ENCODE measurements at regions of chr3 and their contacts with region 1.

Region 1: DNA sequence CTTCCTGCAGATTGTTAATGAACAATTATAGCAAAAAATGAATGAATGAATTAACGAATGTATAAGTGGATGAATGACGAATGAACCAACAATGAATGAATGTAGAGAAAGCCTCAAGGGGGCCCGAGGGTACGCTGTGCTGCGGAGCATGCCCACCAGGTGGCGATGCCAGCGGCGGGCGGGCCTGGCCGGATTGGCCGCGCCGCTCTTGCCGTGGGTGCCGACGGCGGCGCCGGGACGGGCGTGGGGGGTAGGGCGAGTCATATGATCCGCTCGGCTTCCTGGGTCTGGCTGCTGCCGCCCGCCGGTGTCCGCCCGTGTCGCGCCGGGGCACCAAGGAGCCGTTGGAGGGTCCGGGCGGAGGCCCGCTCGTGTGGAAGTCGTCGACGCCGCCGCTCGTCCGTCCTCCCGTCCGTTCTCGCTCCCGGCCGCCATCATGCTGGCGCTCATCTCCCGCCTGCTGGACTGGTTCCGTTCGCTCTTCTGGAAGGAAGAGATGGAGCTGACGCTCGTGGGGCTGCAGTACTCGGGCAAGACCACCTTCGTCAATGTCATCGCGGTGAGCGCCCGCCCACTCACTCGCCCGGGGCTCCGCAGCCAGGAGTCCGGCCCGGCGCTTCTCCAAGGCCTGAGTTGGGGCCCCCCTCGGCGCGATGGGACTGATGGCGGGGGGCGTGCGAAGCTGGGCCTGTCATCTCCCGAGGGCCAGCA is at the start of gene ARL8B:
- DNase-seq: peak; percentile 80 to 90
- H3K4me3 ChIP-seq: peak within 1 kb of the TSS; percentile 77 to 100 (median 100)
- H3K27ac ChIP-seq: peak within 1 kb of the TSS; percentile 95
- H3K4me1 ChIP-seq: peaks cover 0 to 6% of the 10 kb centered on the region in 2 donors
- H3K27me3 ChIP-seq: no peaks in the 10 kb centered on the region
- CTCF ChIP-seq: peak; percentile 92 to 98 (median 93)
- POLR2A ChIP-seq: peak; percentile 53
- total RNA-seq, gene ARL8B: 47.2 to 68.5 (median 52.3) TPM

Region 2: DNA sequence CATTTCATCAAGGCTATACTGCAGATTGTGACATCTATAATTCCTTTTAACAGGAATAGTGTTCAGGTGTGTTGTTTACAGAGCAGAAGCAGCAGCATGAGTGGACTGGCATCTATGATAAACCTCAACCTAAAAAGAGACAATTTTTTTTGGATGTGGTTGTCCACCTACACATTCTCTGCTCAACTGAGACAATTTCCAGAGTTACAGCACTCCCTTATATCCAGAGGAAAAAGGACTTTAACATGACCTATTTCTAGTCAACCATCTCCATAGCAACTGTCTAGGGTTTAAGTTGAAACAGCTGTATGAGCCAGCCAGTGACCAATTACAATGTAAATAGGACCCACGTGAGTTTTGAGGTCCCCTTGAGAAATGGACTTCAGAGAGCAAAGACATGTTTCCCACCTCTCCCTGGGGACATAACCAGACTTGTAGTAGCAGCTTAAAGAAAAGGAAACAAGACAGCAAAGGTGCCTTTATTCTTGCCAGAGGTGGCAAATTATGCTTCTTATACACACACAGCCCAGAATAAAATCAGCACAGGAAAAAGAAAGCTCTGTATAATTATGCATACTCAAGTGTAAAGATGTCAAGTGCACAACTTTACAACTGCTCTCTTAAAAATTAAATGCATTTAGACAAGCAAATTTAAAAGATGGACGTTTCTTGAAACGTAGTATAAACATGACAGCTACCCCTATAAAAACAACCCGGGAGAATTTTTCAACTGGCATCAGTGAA is 695.4 kb before region 1 on chr3:
- intact Hi-C with region 1: no loop called
- DNase-seq: no peak
- H3K4me3 ChIP-seq: no peak overlapping the region
- H3K27ac ChIP-seq: no peak overlapping the region
- H3K4me1 ChIP-seq: no peaks in the 10 kb centered on the region
- H3K27me3 ChIP-seq: no peaks in the 10 kb centered on the region
- CTCF ChIP-seq: no peak
- POLR2A ChIP-seq: no peak

Region 3: DNA sequence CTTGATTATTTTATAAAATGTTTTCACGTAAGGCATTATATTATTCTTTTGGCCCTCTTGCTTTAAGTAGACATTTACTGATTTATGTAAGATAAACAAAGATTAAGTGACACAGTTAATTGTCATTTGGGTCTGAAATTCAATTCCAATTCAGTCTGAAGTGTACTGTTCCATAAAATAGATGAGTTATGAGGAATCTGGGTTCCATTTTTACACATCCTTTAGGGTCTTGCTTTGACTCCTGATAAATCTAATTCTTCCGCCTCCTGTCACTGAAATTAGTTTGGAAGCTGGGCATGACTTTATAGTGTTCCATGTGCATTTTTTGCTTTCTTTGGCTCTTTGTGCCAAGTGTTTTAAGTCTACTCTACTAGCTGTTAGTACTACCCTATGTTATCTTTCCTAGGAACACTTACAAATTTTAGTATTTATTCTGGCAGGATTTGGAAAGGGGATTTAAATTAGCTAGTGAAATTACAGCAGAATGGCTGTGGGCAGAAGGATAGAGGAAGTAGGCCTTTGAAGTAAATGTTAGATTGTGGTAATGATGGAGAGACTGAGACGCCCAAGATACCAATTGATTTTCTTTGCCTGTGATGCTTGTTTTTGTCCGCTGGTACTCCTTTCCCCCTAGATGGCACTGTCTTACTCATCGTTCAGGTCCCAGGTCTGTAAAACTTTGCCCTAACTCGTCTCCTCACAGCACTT is 14.2 kb after region 1 on chr3:
- intact Hi-C with region 1: no loop called
- DNase-seq: no peak
- H3K4me3 ChIP-seq: no peak overlapping the region
- H3K27ac ChIP-seq: peak overlapping the region; percentile 2 to 22
- H3K4me1 ChIP-seq: peaks cover 0 to 10% of the 10 kb centered on the region in 2 donors
- H3K27me3 ChIP-seq: no peaks in the 10 kb centered on the region
- CTCF ChIP-seq: no peak
- POLR2A ChIP-seq: no peak

Region 4: DNA sequence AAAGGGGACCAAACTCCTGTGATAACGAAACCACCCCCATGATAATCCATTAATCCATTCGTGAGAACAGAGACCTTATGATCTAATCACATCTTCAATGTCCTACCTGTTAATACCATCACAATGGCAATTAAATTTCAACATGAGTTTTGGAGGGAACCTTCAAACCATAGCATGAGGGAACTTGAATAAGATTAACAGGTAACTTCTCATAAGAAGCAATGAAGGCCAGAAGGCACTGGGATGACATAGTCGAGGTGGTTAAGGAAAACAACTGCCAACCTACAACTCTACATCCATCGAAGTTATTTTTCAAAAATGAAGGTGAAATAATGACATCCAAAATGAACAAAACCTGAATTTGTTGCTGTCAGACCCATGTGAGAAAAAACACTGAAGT is 544.3 kb after region 1 on chr3:
- intact Hi-C with region 1: loop called (anchors 5 kb)
- DNase-seq: no peak
- H3K4me3 ChIP-seq: no peak overlapping the region
- H3K27ac ChIP-seq: no peak overlapping the region
- H3K4me1 ChIP-seq: no peaks in the 10 kb centered on the region
- H3K27me3 ChIP-seq: no peaks in the 10 kb centered on the region
- CTCF ChIP-seq: no peak
- POLR2A ChIP-seq: no peak